Ovary (tissue), 10 donors: ENCODE measurements at regions of chr1 and their contacts with region 1.

Region 1: DNA sequence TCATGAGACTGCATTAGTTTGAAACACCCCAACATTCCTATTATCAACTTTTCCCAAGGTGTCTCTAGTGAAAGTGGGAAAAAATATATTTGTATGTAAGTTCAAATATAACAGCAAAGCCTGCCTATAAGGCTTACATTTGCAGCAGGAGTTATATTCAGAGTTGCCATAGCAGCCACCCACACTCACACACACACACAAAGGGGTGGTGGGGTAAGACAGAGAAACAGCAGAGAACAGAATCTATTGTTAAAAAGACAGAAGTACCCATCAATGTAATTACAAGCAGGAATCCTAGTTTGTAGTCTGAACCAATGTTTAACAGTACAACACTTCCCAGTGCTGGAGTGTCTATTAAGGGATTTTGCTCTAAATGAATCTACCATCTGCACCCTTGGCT is 55.0 kb downstream of the PLPPR5 start:
- DNase-seq: no peak
- H3K4me3 ChIP-seq: no peak overlapping the region
- H3K27ac ChIP-seq: no peak overlapping the region
- H3K4me1 ChIP-seq: no peaks in the 10 kb centered on the region
- H3K27me3 ChIP-seq: no peaks in the 10 kb centered on the region
- CTCF ChIP-seq: no peak
- EP300 ChIP-seq: no peak
- POLR2A ChIP-seq: no peak

Region 2: GRCh38 chr1:100400404-100400803 is 1450.8 kb after region 1 on chr1:
- intact Hi-C with region 1: loop called in 1 of 4 experiments (anchors 10 kb)
- DNase-seq: no peak
- H3K4me3 ChIP-seq: no peak overlapping the region
- H3K27ac ChIP-seq: no peak overlapping the region
- H3K4me1 ChIP-seq: no peaks in the 10 kb centered on the region
- H3K27me3 ChIP-seq: no peaks in the 10 kb centered on the region
- CTCF ChIP-seq: no peak
- EP300 ChIP-seq: no peak
- POLR2A ChIP-seq: no peak